B cell (primary cell): ENCODE measurements at regions of chr20 and their contacts with region 1.

Region 1: DNA sequence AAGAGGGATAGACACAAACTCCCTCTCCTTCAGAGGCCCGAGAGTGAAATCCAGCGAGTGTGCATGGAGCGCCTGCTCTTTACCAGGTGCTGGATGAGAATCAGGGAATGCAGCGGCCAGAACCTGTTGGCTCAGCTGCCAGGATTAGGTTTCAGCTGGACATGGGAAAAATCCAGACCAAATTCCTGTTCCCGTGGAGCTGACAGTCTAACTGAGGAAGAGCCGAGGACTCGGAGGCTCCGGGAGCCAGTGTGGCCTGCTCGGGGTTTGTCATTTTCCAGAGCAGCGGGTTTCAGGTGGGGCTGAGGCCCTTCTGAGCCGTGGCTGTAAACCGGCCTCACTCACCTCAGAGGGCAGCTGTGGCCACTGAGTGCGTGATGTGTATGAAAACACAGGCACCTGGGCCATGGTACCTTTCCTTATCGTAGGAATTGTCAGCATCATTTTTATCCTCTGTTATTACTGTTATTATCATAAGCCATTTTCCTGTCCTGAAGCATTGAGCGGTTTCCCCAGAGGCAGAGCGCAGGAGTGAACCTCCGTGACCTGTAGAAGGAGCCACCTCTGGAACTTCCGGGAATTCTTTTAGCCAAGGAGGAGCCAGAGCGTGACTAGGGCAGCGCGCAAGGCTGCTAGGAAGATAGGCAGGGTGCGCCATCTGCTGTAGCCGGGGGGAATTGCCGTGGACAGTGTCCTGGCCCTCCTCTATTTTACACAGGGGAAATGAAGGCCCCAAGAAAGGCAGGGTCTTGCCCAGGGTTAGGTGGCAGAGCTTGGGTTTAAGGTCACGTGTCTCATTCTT is 27.3 kb downstream of the PKIG start:
- DNase-seq: peak; percentile 89
- ATAC-seq: peak; percentile 96
- H3K4me3 ChIP-seq: peak overlapping the region in 2 of 5 experiments; percentile 5 to 28
- H3K4me3 Mint-ChIP-seq: peak overlapping the region; percentile 84
- H3K27ac ChIP-seq: peak overlapping the region; percentile 67 to 68
- H3K27ac Mint-ChIP-seq: peak overlapping the region; percentile 96
- H3K4me1 ChIP-seq: peaks cover 26 to 33% of the 10 kb centered on the region in 2 donors
- H3K4me1 Mint-ChIP-seq: peaks cover 55% of the 10 kb centered on the region
- H3K27me3 ChIP-seq: no peaks in the 10 kb centered on the region
- H3K27me3 Mint-ChIP-seq: no peaks in the 10 kb centered on the region
- CTCF ChIP-seq: peak; percentile 97

Region 2: GRCh38 chr20:44388466-44389023 is 221.2 kb before region 1 on chr20:
- CTCF ChIA-PET with region 1: interaction called, 20 read pairs
- POLR2A ChIA-PET with region 1: no interaction called
- intact Hi-C with region 1: loop called (anchors 1 kb)
- DNase-seq: peak; percentile 63
- ATAC-seq: peak; percentile 69
- H3K4me3 ChIP-seq: no peak overlapping the region
- H3K4me3 Mint-ChIP-seq: no peak overlapping the region
- H3K27ac ChIP-seq: no peak overlapping the region
- H3K27ac Mint-ChIP-seq: no peak overlapping the region
- H3K4me1 ChIP-seq: peaks cover 3 to 9% of the 10 kb centered on the region in 2 donors
- H3K4me1 Mint-ChIP-seq: peaks cover 5% of the 10 kb centered on the region
- H3K27me3 ChIP-seq: peaks cover 0 to 15% (median 5%) of the 10 kb centered on the region in 4 experiments
- H3K27me3 Mint-ChIP-seq: peaks cover 30% of the 10 kb centered on the region
- CTCF ChIP-seq: peak; percentile 74

Region 3: DNA sequence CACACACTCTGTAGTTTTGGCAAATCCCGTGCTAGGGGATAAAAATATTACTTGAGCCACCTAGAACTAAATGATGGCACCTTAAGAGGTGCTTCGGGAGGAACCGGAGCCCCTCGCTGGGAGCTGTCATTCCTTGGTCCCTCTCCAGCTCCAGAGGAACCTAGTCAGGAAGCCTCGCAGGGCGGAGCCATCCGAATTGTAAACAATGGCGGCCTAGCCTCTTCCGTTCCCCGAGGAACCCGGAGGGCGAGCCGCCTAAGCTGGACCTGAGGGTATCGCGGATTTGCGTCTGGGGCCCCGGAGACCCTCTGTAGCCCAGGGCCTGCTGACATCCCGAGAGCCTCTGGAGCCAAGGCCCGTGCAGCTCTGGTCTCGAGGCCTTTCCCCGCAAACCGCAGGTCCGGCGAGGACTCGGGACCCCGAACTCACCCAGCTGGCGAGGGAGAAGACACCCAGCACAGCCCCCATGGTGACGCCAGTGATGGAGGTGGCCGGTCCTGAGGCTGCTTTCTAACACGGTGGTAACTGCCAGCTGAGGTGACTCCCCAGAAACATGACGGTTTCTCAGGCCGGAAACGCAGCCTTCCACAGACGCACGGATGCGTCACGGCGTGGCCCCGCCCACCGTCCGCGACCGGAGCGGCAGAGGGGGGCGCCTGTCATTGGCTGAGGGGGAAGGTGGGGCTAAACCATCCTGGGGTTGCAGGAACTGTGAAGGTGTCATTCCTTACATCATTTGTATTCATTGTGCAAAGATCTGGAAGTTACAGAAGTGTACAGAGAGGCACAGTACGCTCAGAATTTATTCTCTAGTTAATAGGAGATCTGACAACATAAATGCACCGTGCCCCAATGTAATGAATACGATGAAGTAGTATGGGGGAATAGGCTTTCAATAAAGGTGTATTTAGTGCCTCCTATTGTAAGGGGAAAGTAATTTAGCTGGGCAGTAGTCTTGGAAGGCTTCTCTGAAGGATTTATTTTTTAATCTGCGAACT is 87.9 kb before region 1 on chr20 and contains the start of gene SERINC3:
- CTCF ChIA-PET with region 1: interaction called, 6 read pairs
- POLR2A ChIA-PET with region 1: interaction called, 6 read pairs
- intact Hi-C with region 1: loop called (anchors 2 kb)
- DNase-seq: peak; percentile 98
- ATAC-seq: peak; percentile 99
- H3K4me3 ChIP-seq: peak within 1 kb of the TSS; percentile 89 to 98 (median 95)
- H3K4me3 Mint-ChIP-seq: peak within 1 kb of the TSS; percentile 97
- H3K27ac ChIP-seq: peak within 1 kb of the TSS; percentile 94 to 95
- H3K27ac Mint-ChIP-seq: peak within 1 kb of the TSS; percentile 94
- H3K4me1 ChIP-seq: peaks cover 18 to 25% of the 10 kb centered on the region in 2 donors
- H3K4me1 Mint-ChIP-seq: peaks cover 51% of the 10 kb centered on the region
- H3K27me3 ChIP-seq: no peaks in the 10 kb centered on the region
- H3K27me3 Mint-ChIP-seq: peaks cover 1% of the 10 kb centered on the region
- CTCF ChIP-seq: no peak
- total RNA-seq, gene SERINC3: 51.6 and 56.7 TPM in 2 replicates

Region 4: GRCh38 chr20:44582311-44583025 is 27.2 kb before region 1 on chr20 and contains the start of gene PKIG:
- CTCF ChIA-PET with region 1: interaction called, 772 read pairs
- POLR2A ChIA-PET with region 1: interaction called, 19 read pairs
- intact Hi-C with region 1: no loop called
- DNase-seq: peak; percentile 57
- ATAC-seq: no peak
- H3K4me3 ChIP-seq: peak within 1 kb of the TSS; percentile 57 to 94 (median 76)
- H3K4me3 Mint-ChIP-seq: peak within 1 kb of the TSS; percentile 92
- H3K27ac ChIP-seq: peak within 1 kb of the TSS; percentile 85 to 89
- H3K27ac Mint-ChIP-seq: peak within 1 kb of the TSS; percentile 91
- H3K4me1 ChIP-seq: peaks cover 68 to 79% of the 10 kb centered on the region in 2 donors
- H3K4me1 Mint-ChIP-seq: peaks cover 86% of the 10 kb centered on the region
- H3K27me3 ChIP-seq: no peaks in the 10 kb centered on the region
- H3K27me3 Mint-ChIP-seq: no peaks in the 10 kb centered on the region
- CTCF ChIP-seq: no peak
- total RNA-seq, gene PKIG: 117 and 128 TPM in 2 replicates

Region 5: GRCh38 chr20:44633187-44633810 is 23.6 kb after region 1 on chr20:
- CTCF ChIA-PET with region 1: interaction called, 14 read pairs
- POLR2A ChIA-PET with region 1: interaction called, 4 read pairs
- intact Hi-C with region 1: no loop called
- DNase-seq: no peak
- ATAC-seq: no peak
- H3K4me3 ChIP-seq: no peak overlapping the region
- H3K4me3 Mint-ChIP-seq: no peak overlapping the region
- H3K27ac ChIP-seq: no peak overlapping the region
- H3K27ac Mint-ChIP-seq: no peak overlapping the region
- H3K4me1 ChIP-seq: no peaks in the 10 kb centered on the region
- H3K4me1 Mint-ChIP-seq: peaks cover 3% of the 10 kb centered on the region
- H3K27me3 ChIP-seq: no peaks in the 10 kb centered on the region
- H3K27me3 Mint-ChIP-seq: no peaks in the 10 kb centered on the region
- CTCF ChIP-seq: no peak

Region 6: GRCh38 chr20:44866703-44867335 is 257.1 kb after region 1 on chr20:
- CTCF ChIA-PET with region 1: no interaction called
- POLR2A ChIA-PET with region 1: no interaction called
- intact Hi-C with region 1: loop called (anchors 1 kb)
- DNase-seq: no peak
- ATAC-seq: no peak
- H3K4me3 ChIP-seq: no peak overlapping the region
- H3K4me3 Mint-ChIP-seq: peak overlapping the region; percentile 76
- H3K27ac ChIP-seq: no peak overlapping the region
- H3K27ac Mint-ChIP-seq: no peak overlapping the region
- H3K4me1 ChIP-seq: peaks cover 0 to 8% of the 10 kb centered on the region in 2 donors
- H3K4me1 Mint-ChIP-seq: peaks cover 6% of the 10 kb centered on the region
- H3K27me3 ChIP-seq: peaks cover 0 to 7% (median 1%) of the 10 kb centered on the region in 4 experiments
- H3K27me3 Mint-ChIP-seq: peaks cover 3% of the 10 kb centered on the region
- CTCF ChIP-seq: no peak